Activated naive CD4-positive, alpha-beta T cell treated with anti-CD3 and anti-CD28 coated beads for 36 hours (primary cell): ENCODE measurements at regions of chr10 and their contacts with region 1.

Region 1: GRCh38 chr10:119131512-119132240 is 27.8 kb downstream of the DENND10 start:
- DNase-seq: peak; percentile 80
- H3K4me3 Mint-ChIP-seq: peak overlapping the region; percentile 80
- H3K27ac Mint-ChIP-seq: peak overlapping the region; percentile 99
- H3K4me1 Mint-ChIP-seq: peaks cover 44% of the 10 kb centered on the region
- H3K27me3 Mint-ChIP-seq: no peaks in the 10 kb centered on the region

Region 2: GRCh38 chr10:119028900-119029612 is 102.6 kb before region 1 on chr10:
- CTCF ChIA-PET with region 1: no interaction called
- intact Hi-C with region 1: loop called (anchors 2 kb)
- DNase-seq: peak; percentile 73
- H3K4me3 Mint-ChIP-seq: peak overlapping the region; percentile 66
- H3K27ac Mint-ChIP-seq: no peak overlapping the region
- H3K4me1 Mint-ChIP-seq: peaks cover 16% of the 10 kb centered on the region
- H3K27me3 Mint-ChIP-seq: peaks cover 4% of the 10 kb centered on the region

Region 3: GRCh38 chr10:119103903-119104652 is 27.6 kb before region 1 on chr10 and contains the start of gene DENND10:
- CTCF ChIA-PET with region 1: interaction called, 5 read pairs
- intact Hi-C with region 1: loop called (anchors 1 kb)
- DNase-seq: peak; percentile 81
- H3K4me3 Mint-ChIP-seq: peak within 1 kb of the TSS; percentile 72
- H3K27ac Mint-ChIP-seq: no peak within 1 kb of the TSS
- H3K4me1 Mint-ChIP-seq: peaks cover 6% of the 10 kb centered on the region
- H3K27me3 Mint-ChIP-seq: no peaks in the 10 kb centered on the region
- total RNA-seq, gene DENND10: 16.9 to 17.6 TPM

Region 4: GRCh38 chr10:119178372-119179119 is 46.9 kb after region 1 on chr10 and contains the start of gene PRDX3:
- CTCF ChIA-PET with region 1: no interaction called
- intact Hi-C with region 1: loop called (anchors 1 kb)
- DNase-seq: peak; percentile 96
- H3K4me3 Mint-ChIP-seq: peak within 1 kb of the TSS; percentile 93
- H3K27ac Mint-ChIP-seq: peak within 1 kb of the TSS; percentile 95
- H3K4me1 Mint-ChIP-seq: peaks cover 42% of the 10 kb centered on the region
- H3K27me3 Mint-ChIP-seq: no peaks in the 10 kb centered on the region
- total RNA-seq, gene PRDX3: 215 to 216 TPM

Region 5: GRCh38 chr10:119502209-119502608 is 370.5 kb after region 1 on chr10:
- CTCF ChIA-PET with region 1: no interaction called
- intact Hi-C with region 1: loop called (anchors 2 kb)
- DNase-seq: peak; percentile 93
- H3K4me3 Mint-ChIP-seq: peak overlapping the region; percentile 47
- H3K27ac Mint-ChIP-seq: peak overlapping the region; percentile 99
- H3K4me1 Mint-ChIP-seq: peaks cover 98% of the 10 kb centered on the region
- H3K27me3 Mint-ChIP-seq: no peaks in the 10 kb centered on the region